Sciatic nerve (tissue), 2 donors: ENCODE measurements at regions of chr13 and their contacts with region 1.

Region 1: DNA sequence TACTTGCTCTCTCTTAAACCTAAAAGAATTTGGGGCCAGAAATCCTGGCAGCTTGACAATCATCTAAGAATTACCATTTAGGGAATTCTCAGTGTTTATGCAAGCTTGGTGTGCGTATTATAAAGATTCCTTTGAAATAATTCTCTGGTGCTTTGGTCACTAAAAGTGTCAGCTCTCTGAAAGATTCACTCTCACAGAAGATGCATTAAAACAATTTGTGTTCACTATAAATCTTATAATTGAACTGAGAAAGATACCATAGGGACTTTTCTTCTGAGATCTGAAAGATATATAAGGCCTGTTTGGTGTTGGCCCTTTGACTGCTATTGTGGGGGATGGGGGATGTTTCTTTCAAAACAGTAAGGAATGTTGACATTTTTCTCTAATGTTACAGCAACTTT is 27.3 kb downstream of the EPSTI1 start:
- DNase-seq: no peak
- ATAC-seq: no peak

Region 2: DNA sequence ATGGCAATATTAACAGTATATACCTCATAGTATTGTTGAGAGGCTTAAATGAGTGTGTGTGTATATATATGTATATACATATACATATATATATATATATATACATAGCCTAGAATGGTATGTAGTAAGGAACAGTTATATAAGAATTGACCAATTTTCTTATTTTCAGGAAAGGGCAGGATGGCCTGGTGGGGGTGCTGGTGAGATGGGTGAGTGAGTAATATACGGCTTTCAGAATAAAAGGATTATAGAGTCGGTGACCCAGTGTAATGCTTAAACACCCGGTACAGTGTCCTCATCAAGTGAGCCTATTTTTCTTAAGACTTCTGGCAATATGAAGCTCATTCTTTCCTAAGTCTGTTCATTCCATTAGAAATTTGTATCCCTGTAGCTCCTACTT is 195.1 kb before region 1 on chr13:
- intact Hi-C with region 1: loop called (anchors 5 kb)
- DNase-seq: no peak
- ATAC-seq: no peak